ENCODE measurements at regions of chr3 and their contacts with region 1.

Region 1: GRCh38 chr3:190024912-190025311 is 95.8 kb downstream of the P3H2 start:
- DNase-seq: no peak
- ATAC-seq: no peak
- H3K4me3 ChIP-seq: no peak overlapping the region
- H3K27ac ChIP-seq: no peak overlapping the region
- H3K4me1 ChIP-seq: no peaks in the 10 kb centered on the region
- H3K27me3 ChIP-seq: no peaks in the 10 kb centered on the region

Region 2: GRCh38 chr3:190120269-190121060 is 95.6 kb after region 1 on chr3 and contains the start of gene P3H2:
- intact Hi-C with region 1: loop called in 1 of 4 experiments (anchors 10 kb)
- DNase-seq: peak; percentile 81 to 93 (median 93)
- ATAC-seq: peak; percentile 99
- H3K4me3 ChIP-seq: peak within 1 kb of the TSS; percentile 90
- H3K27ac ChIP-seq: peak within 1 kb of the TSS; percentile 65
- H3K4me1 ChIP-seq: no peaks in the 10 kb centered on the region
- H3K27me3 ChIP-seq: no peaks in the 10 kb centered on the region
- total RNA-seq, gene P3H2: 1.7 to 4.1 (median 3.0) TPM

Region 3: GRCh38 chr3:190155752-190156151 is 130.8 kb after region 1 on chr3:
- intact Hi-C with region 1: no loop called
- DNase-seq: no peak
- ATAC-seq: no peak
- H3K4me3 ChIP-seq: no peak overlapping the region
- H3K27ac ChIP-seq: no peak overlapping the region
- H3K4me1 ChIP-seq: no peaks in the 10 kb centered on the region
- H3K27me3 ChIP-seq: no peaks in the 10 kb centered on the region